Testis (tissue), 5 donors: ENCODE measurements at regions of chr4 and their contacts with region 1.

Region 1: DNA sequence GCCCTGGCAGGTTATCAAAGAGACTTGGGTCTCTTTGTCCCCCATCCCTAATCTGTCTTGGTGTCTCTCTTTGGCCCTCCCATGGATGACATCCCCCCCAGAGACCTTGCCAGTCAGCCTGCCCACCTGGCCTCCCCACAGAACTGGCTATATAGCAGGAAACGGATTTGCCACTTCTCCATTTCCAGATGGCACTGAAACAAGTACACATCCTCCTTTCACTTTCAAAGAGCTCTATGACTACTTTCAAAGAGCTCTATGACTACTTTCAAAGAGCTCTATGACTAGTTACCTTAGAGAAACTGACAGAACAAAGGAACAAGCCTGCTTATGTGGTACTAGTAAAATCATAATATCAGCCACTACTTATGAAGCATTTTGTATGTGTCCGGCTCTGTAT is 175.3 kb downstream of the MAML3 start:
- DNase-seq: no peak
- H3K4me3 ChIP-seq: no peak overlapping the region
- H3K27ac ChIP-seq: no peak overlapping the region
- H3K4me1 ChIP-seq: peaks cover 25% of the 10 kb centered on the region
- H3K27me3 ChIP-seq: no peaks in the 10 kb centered on the region
- CTCF ChIP-seq: no peak
- POLR2A ChIP-seq: no peak

Region 2: DNA sequence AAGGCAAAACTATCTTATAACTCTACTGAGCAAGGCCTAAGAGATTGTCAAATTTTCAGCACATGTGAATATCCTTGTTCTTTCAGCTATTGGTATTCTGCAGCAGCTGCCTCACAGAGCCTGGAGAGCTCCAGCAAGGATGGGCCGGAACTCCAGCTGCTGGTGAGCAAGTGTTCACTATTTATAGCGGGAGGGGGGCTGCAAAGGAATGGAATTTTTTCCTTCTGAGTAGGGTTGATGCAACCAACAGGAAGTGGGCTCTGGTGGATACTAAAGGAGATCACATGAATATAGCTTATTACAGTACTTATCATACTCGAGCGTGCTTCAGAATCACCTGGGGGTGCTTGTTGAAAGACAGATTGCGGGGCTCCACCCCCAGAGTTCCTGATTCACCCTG is 402.5 kb before region 1 on chr4:
- intact Hi-C with region 1: no loop called
- DNase-seq: no peak
- H3K4me3 ChIP-seq: no peak overlapping the region
- H3K27ac ChIP-seq: no peak overlapping the region
- H3K4me1 ChIP-seq: no peaks in the 10 kb centered on the region
- H3K27me3 ChIP-seq: no peaks in the 10 kb centered on the region
- CTCF ChIP-seq: no peak
- POLR2A ChIP-seq: no peak

Region 3: GRCh38 chr4:139728840-139729239 is 249.9 kb before region 1 on chr4:
- intact Hi-C with region 1: no loop called
- DNase-seq: no peak
- H3K4me3 ChIP-seq: no peak overlapping the region
- H3K27ac ChIP-seq: no peak overlapping the region
- H3K4me1 ChIP-seq: peaks cover 14% of the 10 kb centered on the region
- H3K27me3 ChIP-seq: no peaks in the 10 kb centered on the region
- CTCF ChIP-seq: no peak
- POLR2A ChIP-seq: no peak

Region 4: GRCh38 chr4:139783741-139784484 is 194.8 kb before region 1 on chr4:
- intact Hi-C with region 1: no loop called
- DNase-seq: no peak
- H3K4me3 ChIP-seq: no peak overlapping the region
- H3K27ac ChIP-seq: no peak overlapping the region
- H3K4me1 ChIP-seq: peaks cover 6% of the 10 kb centered on the region
- H3K27me3 ChIP-seq: no peaks in the 10 kb centered on the region
- CTCF ChIP-seq: no peak
- POLR2A ChIP-seq: no peak

Region 5: DNA sequence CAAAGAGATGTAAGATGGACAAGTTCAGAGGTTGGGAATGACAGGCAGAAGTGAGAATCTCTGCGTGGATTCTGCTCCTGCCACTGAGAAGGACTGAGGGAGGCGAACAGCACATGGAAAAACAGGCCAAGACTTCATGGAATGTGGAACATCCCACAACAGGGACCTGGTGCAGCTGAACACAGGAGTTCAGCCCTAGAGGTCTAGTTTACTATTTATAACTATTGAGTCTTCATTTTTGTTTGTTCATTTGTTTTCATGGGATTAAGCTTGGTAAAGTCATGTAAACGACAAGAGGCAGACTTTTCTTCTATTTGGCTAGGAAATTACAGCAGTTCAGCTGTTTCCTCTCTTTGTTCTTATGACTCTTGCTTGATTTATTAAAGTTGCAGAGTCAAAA is 59.2 kb before region 1 on chr4:
- intact Hi-C with region 1: loop called (anchors 10 kb)
- DNase-seq: peak; percentile 54
- H3K4me3 ChIP-seq: no peak overlapping the region
- H3K27ac ChIP-seq: peak overlapping the region in 1 of 2 donors; percentile 85
- H3K4me1 ChIP-seq: peaks cover 52% of the 10 kb centered on the region
- H3K27me3 ChIP-seq: no peaks in the 10 kb centered on the region
- CTCF ChIP-seq: no peak
- POLR2A ChIP-seq: no peak